Activated CD8-positive, alpha-beta T cell treated with anti-CD3 and anti-CD28 coated beads for 36 hours (primary cell): ENCODE measurements at regions of chr6 and their contacts with region 1.

Region 1: GRCh38 chr6:73688351-73688750 is 7.7 kb upstream of the CD109 start:
- DNase-seq: no peak
- ATAC-seq: no peak
- H3K4me3 Mint-ChIP-seq: no peak overlapping the region
- H3K27ac Mint-ChIP-seq: no peak overlapping the region
- H3K4me1 Mint-ChIP-seq: peaks cover 7% of the 10 kb centered on the region
- H3K27me3 Mint-ChIP-seq: peaks cover 11% of the 10 kb centered on the region
- CTCF ChIP-seq: no peak

Region 2: GRCh38 chr6:73675466-73676098 is 12.8 kb before region 1 on chr6:
- CTCF ChIA-PET with region 1: interaction called, 24 read pairs
- POLR2A ChIA-PET with region 1: no interaction called
- intact Hi-C with region 1: no loop called
- DNase-seq: peak; percentile 84
- ATAC-seq: peak; percentile 94
- H3K4me3 Mint-ChIP-seq: no peak overlapping the region
- H3K27ac Mint-ChIP-seq: no peak overlapping the region
- H3K4me1 Mint-ChIP-seq: peaks cover 7% of the 10 kb centered on the region
- H3K27me3 Mint-ChIP-seq: peaks cover 22% of the 10 kb centered on the region
- CTCF ChIP-seq: peak; percentile 93

Region 3: DNA sequence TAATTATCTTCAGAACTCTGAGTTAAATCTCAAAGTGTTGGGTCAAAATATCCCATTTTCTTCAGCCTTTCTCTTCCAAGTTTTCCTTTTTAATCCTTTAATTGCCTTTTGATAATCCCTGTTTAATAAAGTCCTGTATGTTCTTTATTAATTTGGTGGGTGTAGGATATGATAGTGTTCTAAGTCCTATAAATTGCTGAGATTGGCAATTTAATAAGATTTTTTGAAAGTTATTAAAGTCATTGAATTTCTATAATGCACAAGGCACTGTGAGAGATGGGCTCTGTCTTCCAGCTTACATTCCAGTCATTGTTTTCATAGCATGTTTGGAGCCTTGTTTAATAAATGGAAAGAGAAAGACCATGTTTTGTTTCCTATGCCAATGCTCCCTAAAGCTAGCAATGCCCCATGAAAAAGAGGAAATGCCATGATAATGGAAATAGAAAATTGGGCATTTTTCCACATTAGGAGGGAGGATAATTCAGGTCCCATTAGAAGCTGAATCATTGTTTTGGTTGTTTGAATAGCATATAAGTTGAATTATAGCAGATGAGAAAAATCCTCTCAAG is 412.5 kb after region 1 on chr6:
- CTCF ChIA-PET with region 1: no interaction called
- POLR2A ChIA-PET with region 1: no interaction called
- intact Hi-C with region 1: no loop called
- DNase-seq: no peak
- ATAC-seq: no peak
- H3K4me3 Mint-ChIP-seq: no peak overlapping the region
- H3K27ac Mint-ChIP-seq: no peak overlapping the region
- H3K4me1 Mint-ChIP-seq: no peaks in the 10 kb centered on the region
- H3K27me3 Mint-ChIP-seq: no peaks in the 10 kb centered on the region
- CTCF ChIP-seq: no peak